ENCODE measurements at regions of chr1 and their contacts with region 1.

Region 1: DNA sequence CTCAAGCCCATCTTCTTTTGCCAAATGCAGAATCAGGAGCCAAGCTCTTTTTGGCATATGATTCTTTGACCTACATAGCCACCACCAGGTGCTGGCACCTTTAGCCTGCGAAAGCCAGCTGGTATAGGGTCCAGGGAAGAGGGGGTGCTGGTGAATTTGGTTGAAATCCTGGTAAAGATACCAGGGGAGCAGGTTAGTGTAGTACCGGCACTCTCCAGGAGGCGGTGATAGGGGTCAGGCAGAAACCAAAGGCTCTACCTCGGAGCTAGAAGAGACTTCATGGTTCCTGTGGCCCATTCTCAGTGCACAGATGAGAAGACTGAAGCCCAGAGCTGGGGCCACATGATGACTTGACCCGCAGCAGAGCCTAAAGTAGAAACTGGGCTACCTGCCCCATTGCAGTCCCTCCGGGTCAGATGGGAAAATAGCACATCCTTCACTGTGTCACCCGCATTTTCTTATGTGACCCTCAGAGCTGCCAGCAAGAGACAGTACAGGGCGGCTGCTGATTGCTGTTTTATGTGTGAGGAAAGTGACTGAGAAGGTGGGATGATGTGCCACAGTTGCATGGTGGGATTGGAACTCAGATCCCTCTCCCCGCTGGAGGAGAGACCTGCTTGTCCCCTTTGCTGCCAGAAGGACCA is 36.0 kb upstream of the IL19 start:
- DNase-seq: peak; percentile 93
- H3K4me3 Mint-ChIP-seq: no peak overlapping the region
- H3K27ac Mint-ChIP-seq: no peak overlapping the region
- H3K4me1 Mint-ChIP-seq: peaks cover 59% of the 10 kb centered on the region
- H3K27me3 Mint-ChIP-seq: no peaks in the 10 kb centered on the region

Region 2: GRCh38 chr1:206757524-206758266 is 23.1 kb after region 1 on chr1:
- intact Hi-C with region 1: loop called (anchors 2 kb)
- DNase-seq: peak; percentile 73
- H3K4me3 Mint-ChIP-seq: no peak overlapping the region
- H3K27ac Mint-ChIP-seq: no peak overlapping the region
- H3K4me1 Mint-ChIP-seq: peaks cover 18% of the 10 kb centered on the region
- H3K27me3 Mint-ChIP-seq: peaks cover 28% of the 10 kb centered on the region

Region 3: DNA sequence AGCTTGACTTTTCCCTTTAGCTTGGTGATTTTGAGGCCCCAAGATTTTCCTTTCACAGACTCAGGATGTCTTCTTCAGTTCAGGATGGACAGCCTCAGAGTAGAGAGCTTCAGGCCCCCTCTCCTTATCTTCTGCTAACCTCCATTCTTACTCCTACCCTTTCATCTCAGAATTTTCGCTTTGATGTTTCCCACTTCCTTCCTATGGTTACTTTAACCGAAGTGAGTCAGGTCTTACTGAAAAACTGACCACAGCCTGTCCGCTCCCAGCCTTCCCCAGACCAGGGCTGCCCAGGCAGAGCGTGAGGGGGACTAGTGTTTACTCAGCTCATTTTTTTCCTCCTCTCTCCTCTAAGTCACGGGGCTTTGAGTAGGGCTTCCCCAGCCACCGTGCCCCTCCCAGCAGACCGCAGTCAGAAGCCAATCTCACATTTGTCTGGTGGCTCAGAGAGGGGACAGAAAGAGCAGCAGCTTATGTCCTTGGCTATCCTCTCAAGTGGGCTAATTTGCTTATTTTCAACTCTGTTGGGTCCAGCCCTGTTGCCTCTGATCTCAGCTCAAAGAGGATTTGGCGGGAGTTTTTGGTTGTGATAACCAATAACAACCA is 31.7 kb after region 1 on chr1:
- intact Hi-C with region 1: loop called (anchors 1 kb)
- DNase-seq: peak; percentile 91
- H3K4me3 Mint-ChIP-seq: peak overlapping the region; percentile 74
- H3K27ac Mint-ChIP-seq: peak overlapping the region; percentile 80
- H3K4me1 Mint-ChIP-seq: peaks cover 56% of the 10 kb centered on the region
- H3K27me3 Mint-ChIP-seq: peaks cover 27% of the 10 kb centered on the region

Region 4: DNA sequence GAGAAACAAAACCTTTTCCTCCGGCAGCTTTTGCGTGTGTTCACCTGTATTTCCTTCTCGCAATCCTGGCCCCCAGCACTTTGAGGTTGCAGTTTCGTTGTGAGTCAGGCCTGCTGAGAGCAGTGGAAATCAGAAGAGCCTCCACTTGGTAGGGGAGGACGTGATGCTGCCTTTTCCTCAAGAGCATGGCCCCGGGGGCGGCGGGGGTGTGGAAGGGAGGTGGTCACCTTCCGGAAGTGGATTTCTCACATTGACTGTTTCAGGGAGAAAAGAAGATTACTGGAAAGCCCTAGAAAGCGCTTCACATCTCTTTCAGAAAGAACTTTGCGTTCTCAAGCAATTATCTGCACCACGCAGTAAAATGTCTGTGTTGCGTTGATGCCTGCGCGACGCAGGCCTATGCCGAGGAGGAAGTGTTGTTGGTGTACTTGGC is 49.9 kb after region 1 on chr1:
- intact Hi-C with region 1: loop called (anchors 1 kb)
- DNase-seq: peak; percentile 96
- H3K4me3 Mint-ChIP-seq: peak overlapping the region; percentile 52
- H3K27ac Mint-ChIP-seq: peak overlapping the region; percentile 73
- H3K4me1 Mint-ChIP-seq: peaks cover 57% of the 10 kb centered on the region
- H3K27me3 Mint-ChIP-seq: peaks cover 26% of the 10 kb centered on the region

Region 5: DNA sequence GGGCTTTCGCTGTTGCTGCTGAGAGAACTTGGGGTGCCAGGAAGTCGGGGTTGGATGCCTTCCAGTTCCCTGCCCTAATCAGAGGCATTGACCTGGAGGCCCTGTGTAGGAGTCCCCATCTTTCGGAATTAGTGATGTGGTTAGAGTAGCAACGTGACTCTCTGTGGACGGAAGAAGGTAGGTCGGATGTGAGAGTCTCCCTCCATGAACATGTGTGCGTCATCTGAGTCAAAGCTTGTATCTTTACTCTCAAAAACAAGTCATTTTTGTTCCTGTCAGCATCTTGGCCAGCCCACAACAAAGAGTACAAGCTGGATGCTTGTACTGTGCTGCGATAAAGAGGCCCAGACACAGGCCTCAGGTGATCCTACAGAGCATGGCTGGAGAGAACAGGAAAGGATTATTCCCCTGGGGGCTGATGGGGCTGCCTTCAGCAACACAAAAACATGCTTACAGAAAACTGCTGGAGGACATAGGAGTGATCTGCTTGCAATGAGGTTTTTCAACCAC is 68.7 kb after region 1 on chr1:
- intact Hi-C with region 1: loop called (anchors 1 kb)
- DNase-seq: peak; percentile 94
- H3K4me3 Mint-ChIP-seq: peak overlapping the region; percentile 55
- H3K27ac Mint-ChIP-seq: peak overlapping the region; percentile 87
- H3K4me1 Mint-ChIP-seq: peaks cover 77% of the 10 kb centered on the region
- H3K27me3 Mint-ChIP-seq: peaks cover 29% of the 10 kb centered on the region

Region 6: GRCh38 chr1:206808615-206809014 is 74.0 kb after region 1 on chr1:
- intact Hi-C with region 1: loop called (anchors 1 kb)
- DNase-seq: peak; percentile 87
- H3K4me3 Mint-ChIP-seq: no peak overlapping the region
- H3K27ac Mint-ChIP-seq: peak overlapping the region; percentile 12
- H3K4me1 Mint-ChIP-seq: peaks cover 47% of the 10 kb centered on the region
- H3K27me3 Mint-ChIP-seq: peaks cover 8% of the 10 kb centered on the region

Region 7: DNA sequence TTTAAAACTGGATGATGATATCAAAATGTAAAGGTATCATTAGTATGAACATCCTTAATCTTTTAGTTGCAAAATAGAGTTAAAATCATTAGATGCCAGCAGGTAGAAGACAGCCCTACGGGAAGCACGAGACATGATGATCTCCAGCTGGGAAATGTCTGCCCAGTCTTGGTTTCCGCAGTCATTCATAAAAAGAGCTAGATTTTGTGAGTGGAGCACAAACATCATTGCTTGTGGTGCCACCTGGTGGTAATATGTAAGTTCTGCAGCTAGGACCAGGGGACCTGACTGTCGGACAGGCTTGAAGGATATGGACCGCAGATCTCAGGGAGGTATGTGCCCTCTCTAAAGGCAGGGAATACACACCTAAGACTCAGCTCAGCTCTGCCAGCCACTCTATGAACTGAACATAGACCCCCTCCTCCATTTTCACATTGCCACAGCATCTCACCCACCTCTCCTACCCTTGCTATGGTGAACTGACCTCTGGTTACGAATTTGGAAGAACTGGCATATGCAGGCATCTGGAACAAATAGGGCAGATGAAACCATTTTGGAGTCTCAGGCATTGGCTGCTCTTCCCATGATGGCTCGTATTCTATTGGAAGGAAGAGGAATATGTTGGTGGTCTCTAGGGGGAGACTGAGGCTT is 177.9 kb after region 1 on chr1:
- intact Hi-C with region 1: loop called (anchors 2 kb)
- DNase-seq: peak; percentile 91
- H3K4me3 Mint-ChIP-seq: no peak overlapping the region
- H3K27ac Mint-ChIP-seq: no peak overlapping the region
- H3K4me1 Mint-ChIP-seq: peaks cover 59% of the 10 kb centered on the region
- H3K27me3 Mint-ChIP-seq: peaks cover 3% of the 10 kb centered on the region

Measured in activated CD4-positive, alpha-beta T cell treated with anti-CD3 and anti-CD28 coated beads, Interleukin-2, amount 10 ng/mL, durations not matched to agents 24 days and 14 days (primary cell).